K562 (cell line): ENCODE measurements at regions of chr2 and their contacts with region 1.

Region 1: GRCh38 chr2:107808959-107809358 is 17.7 kb upstream of the RGPD4 start:
- DNase-seq: no peak
- ATAC-seq: no peak
- H3K4me3 ChIP-seq: no peak overlapping the region
- H3K27ac ChIP-seq: no peak overlapping the region
- H3K4me1 ChIP-seq: no peaks in the 10 kb centered on the region
- H3K27me3 ChIP-seq: peaks cover 2 to 22% of the 10 kb centered on the region in 2 experiments; a peak in 2 of 5 replicates
- CTCF ChIP-seq: no peak
- EP300 ChIP-seq: no peak
- POLR2A ChIP-seq: no peak
- RAD21 ChIP-seq: no peak

Region 2: DNA sequence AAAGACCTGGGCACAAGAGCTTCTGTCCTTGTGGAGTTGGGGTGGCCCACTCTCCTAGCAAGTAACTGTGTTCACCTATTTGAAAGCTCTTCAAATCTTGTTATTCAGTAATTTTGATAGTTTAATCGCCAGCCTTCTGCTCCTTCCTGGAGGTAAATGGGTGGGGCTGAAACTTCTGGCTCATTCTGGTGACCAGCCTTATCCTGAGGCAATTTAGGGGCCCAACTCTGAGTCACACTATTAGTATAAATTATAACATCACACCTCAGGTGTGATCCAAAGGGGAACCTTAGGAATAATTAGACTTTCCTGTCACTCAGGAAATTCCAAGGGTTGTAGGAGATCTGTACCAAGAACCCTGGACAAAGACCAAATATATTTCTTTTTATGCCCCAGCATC is 238.1 kb before region 1 on chr2:
- CTCF ChIA-PET with region 1: no interaction called
- POLR2A ChIA-PET with region 1: no interaction called
- in situ Hi-C with region 1: loop called (anchors 25 kb)
- intact Hi-C with region 1: loop called (anchors 10 kb)
- DNase-seq: no peak
- ATAC-seq: no peak
- H3K4me3 ChIP-seq: no peak overlapping the region
- H3K27ac ChIP-seq: no peak overlapping the region
- H3K4me1 ChIP-seq: no peaks in the 10 kb centered on the region; a peak in 1 of 5 replicates
- H3K27me3 ChIP-seq: no peaks in the 10 kb centered on the region
- CTCF ChIP-seq: no peak
- EP300 ChIP-seq: no peak
- POLR2A ChIP-seq: no peak
- RAD21 ChIP-seq: no peak

Region 3: GRCh38 chr2:107595749-107596148 is 213.2 kb before region 1 on chr2:
- CTCF ChIA-PET with region 1: no interaction called
- POLR2A ChIA-PET with region 1: no interaction called
- in situ Hi-C with region 1: loop called (anchors 25 kb)
- intact Hi-C with region 1: no loop called
- DNase-seq: no peak
- ATAC-seq: no peak
- H3K4me3 ChIP-seq: no peak overlapping the region
- H3K27ac ChIP-seq: no peak overlapping the region
- H3K4me1 ChIP-seq: no peaks in the 10 kb centered on the region
- H3K27me3 ChIP-seq: no peaks in the 10 kb centered on the region
- CTCF ChIP-seq: no peak
- EP300 ChIP-seq: no peak
- POLR2A ChIP-seq: no peak
- RAD21 ChIP-seq: no peak

Region 4: DNA sequence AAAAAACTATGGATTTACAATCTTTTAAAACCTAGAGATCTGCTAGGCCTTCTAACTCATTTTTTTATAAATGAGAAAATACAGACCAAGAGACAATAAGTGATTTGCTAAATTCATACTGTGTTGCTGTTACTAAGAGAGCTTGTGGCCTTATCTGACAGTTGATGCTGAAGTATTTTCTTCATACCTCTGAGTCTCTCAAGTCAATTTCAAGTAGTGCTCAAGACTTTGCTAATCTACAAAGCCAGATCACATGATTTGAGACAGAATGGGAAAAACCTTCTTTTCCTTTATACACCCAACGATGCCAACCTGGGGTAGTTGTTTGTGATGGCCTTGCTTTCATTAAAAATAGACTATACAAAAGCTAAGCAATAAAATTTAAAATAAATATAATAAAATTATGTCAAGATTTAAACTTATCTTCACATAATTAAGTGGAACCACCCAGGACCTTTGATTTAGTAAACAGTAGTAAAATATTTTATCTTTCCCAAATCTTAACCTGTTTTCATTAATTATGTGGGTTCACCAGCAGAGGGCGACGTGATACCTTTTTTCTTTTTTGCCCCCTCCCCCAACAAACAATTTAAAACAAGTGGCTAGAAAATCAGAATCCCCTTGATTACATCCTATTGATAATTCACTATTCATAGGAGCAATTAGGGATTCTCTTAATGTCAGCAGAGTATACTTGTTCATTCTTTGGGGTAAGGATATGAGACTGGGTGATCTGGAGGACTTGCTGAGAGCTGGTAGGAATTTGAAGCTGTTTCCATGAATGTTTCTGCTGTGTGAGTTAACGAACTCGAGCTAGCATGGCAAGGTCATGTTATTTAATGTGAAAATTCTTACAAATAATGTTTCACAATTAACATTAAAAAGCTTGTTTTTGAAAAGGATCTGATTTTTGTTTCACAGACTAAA is 127.7 kb after region 1 on chr2:
- CTCF ChIA-PET with region 1: no interaction called
- POLR2A ChIA-PET with region 1: no interaction called
- in situ Hi-C with region 1: loop called (anchors 25 kb)
- intact Hi-C with region 1: no loop called
- DNase-seq: peak; percentile 28 to 37 (median 30)
- ATAC-seq: no peak
- H3K4me3 ChIP-seq: no peak overlapping the region
- H3K27ac ChIP-seq: no peak overlapping the region
- H3K4me1 ChIP-seq: no peaks in the 10 kb centered on the region
- H3K27me3 ChIP-seq: no peaks in the 10 kb centered on the region; a peak in 1 of 5 replicates
- CTCF ChIP-seq: peak; percentile 31 to 65 (median 46); a peak in 3 of 6 replicates
- EP300 ChIP-seq: no peak
- POLR2A ChIP-seq: no peak
- RAD21 ChIP-seq: peak; percentile 27 to 58; a peak in 3 of 4 replicates

Region 5: GRCh38 chr2:107992069-107992468 is 183.1 kb after region 1 on chr2:
- CTCF ChIA-PET with region 1: no interaction called
- POLR2A ChIA-PET with region 1: no interaction called
- in situ Hi-C with region 1: no loop called
- intact Hi-C with region 1: no loop called
- DNase-seq: no peak
- ATAC-seq: no peak
- H3K4me3 ChIP-seq: no peak overlapping the region
- H3K27ac ChIP-seq: no peak overlapping the region
- H3K4me1 ChIP-seq: no peaks in the 10 kb centered on the region
- H3K27me3 ChIP-seq: no peaks in the 10 kb centered on the region
- CTCF ChIP-seq: no peak
- EP300 ChIP-seq: no peak
- POLR2A ChIP-seq: no peak
- RAD21 ChIP-seq: no peak

Region 6: DNA sequence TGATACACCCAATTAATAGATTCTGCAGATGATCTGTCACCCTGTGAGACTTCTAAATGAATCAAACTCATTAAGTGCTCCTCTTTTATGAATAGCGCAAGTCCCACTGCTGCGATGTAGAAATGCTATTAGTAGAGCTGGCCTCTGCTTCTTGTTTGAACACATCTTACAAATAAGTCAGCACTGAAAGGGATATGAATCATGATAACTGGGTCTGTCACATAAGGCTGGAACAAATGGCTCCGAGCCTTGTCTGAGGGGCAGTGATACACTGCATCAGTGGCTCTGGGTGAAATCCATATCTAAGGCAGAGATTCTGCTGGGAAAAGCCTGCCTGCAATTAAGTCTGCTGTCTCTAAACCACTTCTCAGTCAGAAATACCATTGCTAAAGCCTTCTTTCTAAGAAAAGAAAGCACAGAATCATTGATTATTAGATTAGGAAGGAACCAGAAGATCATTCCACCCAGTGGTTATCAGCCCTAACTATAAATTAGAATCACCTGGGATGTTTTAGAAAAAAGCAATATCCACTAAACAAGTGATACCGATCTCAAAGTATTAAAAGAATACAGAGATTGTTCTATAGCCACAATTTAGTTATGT is 252.6 kb after region 1 on chr2:
- CTCF ChIA-PET with region 1: no interaction called
- POLR2A ChIA-PET with region 1: no interaction called
- in situ Hi-C with region 1: no loop called
- intact Hi-C with region 1: no loop called
- DNase-seq: no peak
- ATAC-seq: no peak
- H3K4me3 ChIP-seq: no peak overlapping the region
- H3K27ac ChIP-seq: no peak overlapping the region
- H3K4me1 ChIP-seq: no peaks in the 10 kb centered on the region
- H3K27me3 ChIP-seq: no peaks in the 10 kb centered on the region
- CTCF ChIP-seq: no peak
- EP300 ChIP-seq: no peak
- POLR2A ChIP-seq: no peak
- RAD21 ChIP-seq: no peak